ENCODE measurements at regions of chr13 and their contacts with region 1.

Region 1: GRCh38 chr13:110715395-110716235 is 2.1 kb downstream of the ING1 start:
- DNase-seq: peak; percentile 97 to 100
- H3K4me3 ChIP-seq: peak overlapping the region; percentile 95
- H3K27ac ChIP-seq: peak overlapping the region; percentile 48
- H3K4me1 ChIP-seq: peaks cover 28% of the 10 kb centered on the region
- H3K27me3 ChIP-seq: no peaks in the 10 kb centered on the region
- CTCF ChIP-seq: no peak

Region 2: GRCh38 chr13:109243311-109243951 is 1472.2 kb before region 1 on chr13:
- CTCF ChIA-PET with region 1: no interaction called
- POLR2A ChIA-PET with region 1: no interaction called
- intact Hi-C with region 1: loop called (anchors 10 kb)
- DNase-seq: peak; percentile 75 to 96
- H3K4me3 ChIP-seq: peak overlapping the region; percentile 22; the same call in 1 of the 2 replicates
- H3K27ac ChIP-seq: peak overlapping the region; percentile 92
- H3K4me1 ChIP-seq: peaks cover 39% of the 10 kb centered on the region
- H3K27me3 ChIP-seq: no peaks in the 10 kb centered on the region
- CTCF ChIP-seq: no peak

Region 3: GRCh38 chr13:110225609-110226562 is 489.7 kb before region 1 on chr13:
- CTCF ChIA-PET with region 1: no interaction called
- POLR2A ChIA-PET with region 1: no interaction called
- intact Hi-C with region 1: loop called (anchors 10 kb)
- DNase-seq: peak in 1 of 2 experiments; percentile 94
- H3K4me3 ChIP-seq: no peak overlapping the region
- H3K27ac ChIP-seq: peak overlapping the region; percentile 60
- H3K4me1 ChIP-seq: peaks cover 29% of the 10 kb centered on the region
- H3K27me3 ChIP-seq: no peaks in the 10 kb centered on the region
- CTCF ChIP-seq: no peak

Region 4: DNA sequence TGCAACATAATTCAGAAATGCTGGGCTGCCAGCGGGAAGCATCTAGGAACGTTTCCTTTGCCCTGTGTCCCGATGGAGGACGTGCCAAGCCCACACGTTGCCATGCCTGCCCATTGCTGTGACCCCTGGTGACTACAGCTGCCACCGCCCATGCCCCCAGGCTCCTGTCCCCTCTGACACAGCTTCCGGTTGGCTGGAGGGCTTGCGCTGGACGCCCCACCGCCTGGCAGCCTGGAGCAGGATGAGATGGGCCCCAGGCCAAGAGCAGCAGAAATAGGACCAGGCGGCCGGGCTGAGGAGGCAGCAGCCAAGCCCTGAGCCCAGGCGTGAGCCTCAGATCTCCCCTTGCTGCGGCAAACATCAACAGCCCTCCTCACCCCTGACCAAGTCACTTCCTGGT is 282.6 kb before region 1 on chr13:
- CTCF ChIA-PET with region 1: no interaction called
- POLR2A ChIA-PET with region 1: no interaction called
- intact Hi-C with region 1: no loop called
- DNase-seq: peak; percentile 35 to 86
- H3K4me3 ChIP-seq: no peak overlapping the region
- H3K27ac ChIP-seq: no peak overlapping the region
- H3K4me1 ChIP-seq: no peaks in the 10 kb centered on the region
- H3K27me3 ChIP-seq: no peaks in the 10 kb centered on the region
- CTCF ChIP-seq: no peak

Region 5: GRCh38 chr13:110538632-110539031 is 177.0 kb before region 1 on chr13:
- CTCF ChIA-PET with region 1: no interaction called
- POLR2A ChIA-PET with region 1: no interaction called
- intact Hi-C with region 1: no loop called
- DNase-seq: no peak
- H3K4me3 ChIP-seq: no peak overlapping the region
- H3K27ac ChIP-seq: no peak overlapping the region
- H3K4me1 ChIP-seq: no peaks in the 10 kb centered on the region
- H3K27me3 ChIP-seq: no peaks in the 10 kb centered on the region
- CTCF ChIP-seq: no peak

Region 6: GRCh38 chr13:110555601-110556223 is 159.9 kb before region 1 on chr13:
- CTCF ChIA-PET with region 1: no interaction called
- POLR2A ChIA-PET with region 1: interaction called, 13 read pairs
- intact Hi-C with region 1: no loop called
- DNase-seq: peak; percentile 42 to 93
- H3K4me3 ChIP-seq: peak overlapping the region; percentile 40; the same call in 1 of the 2 replicates
- H3K27ac ChIP-seq: peak overlapping the region; percentile 89
- H3K4me1 ChIP-seq: peaks cover 52% of the 10 kb centered on the region
- H3K27me3 ChIP-seq: no peaks in the 10 kb centered on the region
- CTCF ChIP-seq: no peak

Region 7: GRCh38 chr13:110665491-110666254 is 49.9 kb before region 1 on chr13:
- CTCF ChIA-PET with region 1: no interaction called
- POLR2A ChIA-PET with region 1: no interaction called
- intact Hi-C with region 1: no loop called
- DNase-seq: no peak
- H3K4me3 ChIP-seq: no peak overlapping the region
- H3K27ac ChIP-seq: no peak overlapping the region
- H3K4me1 ChIP-seq: no peaks in the 10 kb centered on the region
- H3K27me3 ChIP-seq: no peaks in the 10 kb centered on the region
- CTCF ChIP-seq: no peak

Region 8: DNA sequence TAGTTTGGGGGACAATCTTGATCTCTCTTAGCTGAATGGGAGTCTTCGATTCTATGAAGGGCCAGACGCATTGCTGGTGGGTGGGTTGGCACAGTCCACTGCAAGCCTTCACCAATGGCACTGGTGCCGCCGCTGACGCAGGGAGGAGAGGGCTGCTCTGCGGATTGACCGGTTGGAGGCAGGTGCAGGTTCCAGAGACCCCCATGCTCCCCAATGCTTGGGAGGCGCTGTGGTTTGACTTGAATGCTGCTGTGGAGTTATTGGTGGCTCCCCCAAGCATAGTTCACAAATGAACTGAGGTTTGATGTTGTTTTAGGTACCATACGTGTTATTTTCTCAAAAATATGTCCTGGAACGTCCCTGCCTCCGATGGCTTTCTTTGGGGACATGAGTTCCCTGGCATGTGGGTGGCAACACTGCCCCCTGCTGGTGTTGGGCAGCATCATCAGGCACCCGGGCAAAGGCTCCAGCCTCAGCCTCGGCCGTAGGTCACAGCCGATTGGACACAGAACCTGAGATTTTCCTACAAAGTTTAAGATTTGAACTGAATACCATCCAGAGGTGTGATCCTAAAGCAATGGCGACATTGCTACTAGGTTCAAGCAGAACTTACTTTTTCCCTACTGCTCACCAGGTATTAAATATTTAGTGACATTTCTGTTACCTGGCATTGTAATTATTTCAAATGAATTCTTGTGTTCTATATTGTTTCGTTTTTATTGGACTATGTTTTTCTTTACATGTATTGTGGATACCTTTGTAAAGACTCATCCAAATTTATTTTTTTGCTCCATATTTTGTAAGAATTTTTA is 103.8 kb after region 1 on chr13:
- CTCF ChIA-PET with region 1: no interaction called
- POLR2A ChIA-PET with region 1: no interaction called
- intact Hi-C with region 1: loop called (anchors 5 kb)
- DNase-seq: peak; percentile 62 to 72
- H3K4me3 ChIP-seq: no peak overlapping the region
- H3K27ac ChIP-seq: no peak overlapping the region
- H3K4me1 ChIP-seq: peaks cover 18% of the 10 kb centered on the region; the same call in 1 of the 2 replicates
- H3K27me3 ChIP-seq: no peaks in the 10 kb centered on the region
- CTCF ChIP-seq: peak; percentile 99

Region 9: DNA sequence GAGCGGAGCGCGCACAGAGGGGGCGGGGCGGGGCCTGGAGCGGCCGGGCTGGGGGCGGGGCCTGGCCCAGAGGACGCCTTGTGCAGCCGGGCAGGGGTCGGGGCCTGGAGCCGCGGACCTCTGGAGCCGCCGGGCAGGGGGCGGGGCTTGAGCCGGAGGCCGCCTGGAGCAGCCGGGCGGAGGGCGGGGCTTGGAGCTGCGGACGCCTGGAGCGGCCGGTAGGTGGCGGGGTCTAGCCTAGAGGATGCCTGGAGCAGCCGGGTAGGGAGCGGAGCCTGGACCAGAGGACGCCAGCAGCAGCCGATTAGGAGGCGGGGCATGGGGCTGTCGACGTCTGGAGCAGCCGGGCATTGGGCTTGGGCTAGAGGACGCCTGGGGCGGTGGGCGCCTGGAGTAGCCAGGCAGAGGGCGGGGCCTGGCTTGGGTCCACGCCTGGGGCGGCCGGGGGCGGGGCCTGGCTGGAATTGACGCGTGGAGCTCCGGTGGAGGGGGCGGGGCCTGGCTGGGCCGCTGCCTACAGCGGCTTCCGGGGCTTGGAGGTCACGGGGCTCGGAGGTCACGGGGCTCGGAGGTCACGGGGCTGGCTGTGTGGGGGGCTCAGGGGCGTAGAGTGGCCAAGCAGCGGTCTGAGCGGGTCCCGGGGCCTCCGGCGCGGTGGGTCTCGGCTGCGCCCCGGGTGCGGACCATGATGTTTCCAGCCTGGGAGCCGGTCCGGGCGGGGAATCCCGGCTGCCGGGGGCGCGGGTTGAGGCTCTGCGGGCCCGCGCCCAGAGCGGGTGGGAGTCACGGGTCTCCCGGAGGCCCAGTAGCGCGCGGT is 199.7 kb after region 1 on chr13 and contains the start of gene ANKRD10:
- CTCF ChIA-PET with region 1: no interaction called
- POLR2A ChIA-PET with region 1: no interaction called
- intact Hi-C with region 1: loop called (anchors 2 kb)
- DNase-seq: peak; percentile 98 to 100
- H3K4me3 ChIP-seq: peak within 1 kb of the TSS; percentile 82
- H3K27ac ChIP-seq: peak within 1 kb of the TSS; percentile 89
- H3K4me1 ChIP-seq: peaks cover 34% of the 10 kb centered on the region
- H3K27me3 ChIP-seq: no peaks in the 10 kb centered on the region
- CTCF ChIP-seq: peak; percentile 81
- total RNA-seq, gene ANKRD10: 154 and 155 TPM in 2 replicates